Right ventricle myocardium inferior (tissue), 1 donor: ENCODE measurements at regions of chr3 and their contacts with region 1.

Region 1: GRCh38 chr3:129481766-129482332 is 41.8 kb downstream of the IFT122 start:
- DNase-seq: peak; percentile 79
- ATAC-seq: peak; percentile 72

Region 2: DNA sequence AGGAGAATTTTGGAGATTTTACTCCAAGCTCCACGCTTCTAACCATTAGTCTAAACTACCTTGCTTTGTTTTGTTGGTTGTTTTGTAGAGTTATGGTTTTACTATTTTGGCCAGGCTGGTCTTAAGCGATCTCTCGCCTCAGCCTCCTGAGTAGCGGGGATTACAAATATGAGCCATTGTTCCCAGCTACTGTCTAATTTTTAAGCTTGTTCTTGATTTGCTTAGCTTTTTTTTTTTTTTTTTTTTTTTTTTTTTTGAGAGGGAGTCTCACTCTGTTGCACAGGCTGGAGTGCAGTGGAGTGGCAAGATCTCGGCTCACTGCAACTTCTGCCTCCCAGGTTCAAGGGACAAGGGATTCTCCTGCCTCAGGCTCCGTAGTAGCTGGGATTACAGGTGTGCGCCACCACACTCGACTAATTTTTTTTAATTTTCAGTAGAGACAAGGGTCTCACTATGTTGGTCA is 81.9 kb before region 1 on chr3:
- intact Hi-C with region 1: no loop called
- DNase-seq: no peak
- ATAC-seq: peak; percentile 10

Region 3: DNA sequence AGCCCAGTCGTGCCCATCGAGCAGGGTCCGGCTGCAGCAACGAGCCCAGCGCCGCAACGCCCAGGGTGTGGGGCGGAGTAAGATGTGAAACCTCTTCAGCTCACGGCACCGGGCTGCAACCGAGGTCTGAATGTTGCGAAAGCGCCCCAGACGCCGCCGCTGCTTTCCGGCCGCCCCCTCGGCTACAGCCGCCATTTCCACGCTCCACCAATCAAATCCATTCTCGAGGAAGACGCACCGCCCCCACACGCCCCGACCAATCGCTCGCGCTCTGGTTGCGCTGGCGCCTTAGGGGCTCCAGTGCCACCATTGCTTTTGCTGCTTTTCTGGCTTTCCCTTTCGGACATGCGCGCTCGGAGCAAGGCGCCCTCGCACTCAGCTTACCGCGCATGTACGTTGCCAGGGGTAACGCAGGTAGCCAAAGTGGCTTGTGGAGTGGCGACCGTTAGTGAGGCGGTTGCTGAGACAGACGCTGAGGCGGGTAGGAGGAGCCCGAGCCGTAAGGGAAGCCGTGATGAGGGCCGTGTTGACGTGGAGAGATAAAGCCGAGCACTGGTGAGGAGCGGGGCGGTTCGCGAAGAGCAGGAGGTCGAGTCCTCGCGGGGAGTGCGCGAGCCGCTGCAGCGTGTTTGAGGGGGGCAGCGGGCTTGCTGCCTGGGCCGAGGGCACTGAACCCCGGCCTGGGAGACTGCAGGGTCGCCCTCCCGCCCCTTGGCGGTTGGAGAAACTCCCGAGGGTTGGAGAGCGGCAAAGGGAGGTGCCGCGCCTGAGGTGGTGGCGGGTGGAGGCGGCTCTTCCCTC is 41.8 kb before region 1 on chr3 and contains the starts of genes IFT122 and MBD4:
- intact Hi-C with region 1: loop called (anchors 5 kb)
- DNase-seq: peak; percentile 99
- ATAC-seq: peak; percentile 95
- total RNA-seq, gene IFT122: 19.7 TPM
- total RNA-seq, gene MBD4: 20.2 TPM